Activated CD4-positive, alpha-beta T cell treated with anti-CD3 and anti-CD28 coated beads for 36 hours (primary cell): ENCODE measurements at regions of chr1 and their contacts with region 1.

Region 1: DNA sequence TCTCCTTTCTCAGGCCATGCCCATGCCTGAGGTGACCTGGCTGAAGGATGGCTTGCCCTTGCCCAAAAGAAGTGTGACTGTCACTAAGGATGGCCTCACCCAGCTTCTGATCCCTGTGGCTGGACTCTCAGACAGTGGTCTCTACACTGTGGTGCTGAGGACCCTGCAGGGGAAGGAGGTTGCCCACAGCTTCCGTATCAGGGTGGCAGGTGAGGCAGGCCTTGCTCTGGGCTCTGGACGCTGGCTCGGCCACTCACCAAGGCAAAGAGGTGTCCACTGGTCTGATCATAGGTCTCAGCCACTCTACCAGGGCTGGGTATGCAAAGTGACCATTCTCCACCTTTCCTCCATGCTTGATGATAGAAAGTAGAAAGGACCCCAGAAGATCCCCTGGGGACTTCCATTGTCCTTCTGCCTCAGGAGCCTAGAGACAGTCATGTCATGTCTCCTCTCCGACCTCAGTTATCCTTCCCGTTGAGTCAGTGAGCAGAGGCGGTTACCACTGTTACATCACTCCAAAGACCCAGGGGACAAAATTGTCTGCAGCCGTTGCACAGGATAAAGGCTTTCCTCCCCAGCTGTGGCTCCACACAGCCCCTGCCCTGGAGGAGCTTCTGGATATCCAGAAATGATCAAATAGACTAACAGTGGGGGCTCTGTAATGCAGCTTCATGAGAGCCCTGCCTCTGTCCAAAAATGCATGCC is 34.2 kb downstream of the IGFN1 start:
- DNase-seq: no peak
- ATAC-seq: no peak
- H3K4me3 Mint-ChIP-seq: no peak overlapping the region
- H3K27ac Mint-ChIP-seq: no peak overlapping the region
- H3K4me1 Mint-ChIP-seq: no peaks in the 10 kb centered on the region
- H3K27me3 Mint-ChIP-seq: no peaks in the 10 kb centered on the region

Region 2: DNA sequence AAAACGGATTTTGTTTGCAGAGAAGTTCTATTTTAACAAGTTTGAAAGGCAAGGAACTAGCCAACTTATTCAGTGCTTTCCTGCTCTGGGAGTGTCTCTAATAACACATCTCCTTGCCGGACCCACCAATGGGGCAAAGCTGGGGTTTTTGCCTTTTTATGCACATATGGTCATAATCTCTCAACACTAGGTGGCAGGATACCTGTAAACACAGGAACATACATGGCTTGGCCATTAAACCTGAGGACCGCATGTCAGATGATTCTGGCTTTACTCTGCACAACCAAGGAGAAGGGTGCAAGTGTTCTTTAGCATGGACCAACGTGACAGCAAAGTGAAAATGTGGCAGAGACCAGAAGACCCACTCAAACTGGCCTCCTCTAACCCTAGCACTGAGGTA is 75.4 kb before region 1 on chr1:
- CTCF ChIA-PET with region 1: interaction called, 5 read pairs
- POLR2A ChIA-PET with region 1: no interaction called
- intact Hi-C with region 1: loop called (anchors 1 kb)
- DNase-seq: peak; percentile 15
- ATAC-seq: no peak
- H3K4me3 Mint-ChIP-seq: no peak overlapping the region
- H3K27ac Mint-ChIP-seq: no peak overlapping the region
- H3K4me1 Mint-ChIP-seq: peaks cover 14% of the 10 kb centered on the region
- H3K27me3 Mint-ChIP-seq: no peaks in the 10 kb centered on the region